ENCODE measurements at regions of chr17 and their contacts with region 1.

Region 1: GRCh38 chr17:80892019-80892855 is 99.4 kb upstream of the CHMP6 start:
- DNase-seq: peak; percentile 95
- ATAC-seq: peak; percentile 88
- H3K4me3 Mint-ChIP-seq: peak overlapping the region; percentile 74
- H3K27ac Mint-ChIP-seq: peak overlapping the region; percentile 93
- H3K4me1 Mint-ChIP-seq: peaks cover 78% of the 10 kb centered on the region
- H3K27me3 Mint-ChIP-seq: no peaks in the 10 kb centered on the region

Region 2: GRCh38 chr17:80855948-80856862 is 36.0 kb before region 1 on chr17:
- CTCF ChIA-PET with region 1: interaction called, 6 read pairs
- POLR2A ChIA-PET with region 1: interaction called, 12 read pairs
- DNase-seq: peak; percentile 93
- ATAC-seq: peak; percentile 95
- H3K4me3 Mint-ChIP-seq: peak overlapping the region; percentile 54
- H3K27ac Mint-ChIP-seq: peak overlapping the region; percentile 94
- H3K4me1 Mint-ChIP-seq: peaks cover 97% of the 10 kb centered on the region
- H3K27me3 Mint-ChIP-seq: no peaks in the 10 kb centered on the region

Region 3: DNA sequence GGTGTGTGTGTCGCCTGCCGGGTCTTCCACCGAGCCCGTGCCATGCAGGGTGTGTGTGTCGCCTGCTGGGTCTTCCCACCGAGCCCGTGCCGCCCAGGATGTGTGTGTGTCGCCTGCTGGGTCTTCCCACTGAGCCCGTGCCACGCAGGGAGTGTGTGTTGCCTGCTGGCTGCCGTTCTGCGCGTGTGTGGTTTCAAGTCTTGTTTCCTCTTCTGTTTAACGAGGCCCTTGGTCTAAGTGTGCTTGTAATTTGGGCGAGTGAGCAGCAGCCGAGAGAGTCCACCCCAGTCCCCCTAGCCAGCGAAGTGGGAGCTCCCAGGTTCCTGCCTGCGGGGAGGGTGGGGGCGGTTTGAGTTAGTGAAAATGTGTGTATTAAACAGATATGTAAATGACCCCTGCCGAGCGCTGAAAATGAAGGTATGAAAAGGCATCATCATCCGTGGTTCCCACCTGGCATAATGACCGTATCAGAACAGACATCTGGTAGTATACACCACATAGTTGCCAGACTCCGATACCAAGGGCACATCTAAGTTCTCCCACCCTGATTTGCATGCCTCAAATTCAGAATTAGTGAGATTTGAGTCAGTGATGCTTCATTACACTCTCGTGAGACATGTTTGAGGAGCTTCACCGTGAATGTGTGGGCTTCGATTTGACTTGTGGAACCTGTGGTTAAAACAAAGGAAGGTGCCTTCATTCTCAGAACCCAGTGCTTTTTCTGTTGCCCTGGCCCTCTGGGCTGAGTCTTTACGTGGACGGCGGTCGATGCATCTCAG is 15.1 kb before region 1 on chr17:
- CTCF ChIA-PET with region 1: interaction called, 6 read pairs
- POLR2A ChIA-PET with region 1: interaction called, 15 read pairs
- DNase-seq: peak; percentile 80
- ATAC-seq: peak; percentile 89
- H3K4me3 Mint-ChIP-seq: peak overlapping the region; percentile 64
- H3K27ac Mint-ChIP-seq: peak overlapping the region; percentile 98
- H3K4me1 Mint-ChIP-seq: peaks cover 72% of the 10 kb centered on the region
- H3K27me3 Mint-ChIP-seq: no peaks in the 10 kb centered on the region

Region 4: DNA sequence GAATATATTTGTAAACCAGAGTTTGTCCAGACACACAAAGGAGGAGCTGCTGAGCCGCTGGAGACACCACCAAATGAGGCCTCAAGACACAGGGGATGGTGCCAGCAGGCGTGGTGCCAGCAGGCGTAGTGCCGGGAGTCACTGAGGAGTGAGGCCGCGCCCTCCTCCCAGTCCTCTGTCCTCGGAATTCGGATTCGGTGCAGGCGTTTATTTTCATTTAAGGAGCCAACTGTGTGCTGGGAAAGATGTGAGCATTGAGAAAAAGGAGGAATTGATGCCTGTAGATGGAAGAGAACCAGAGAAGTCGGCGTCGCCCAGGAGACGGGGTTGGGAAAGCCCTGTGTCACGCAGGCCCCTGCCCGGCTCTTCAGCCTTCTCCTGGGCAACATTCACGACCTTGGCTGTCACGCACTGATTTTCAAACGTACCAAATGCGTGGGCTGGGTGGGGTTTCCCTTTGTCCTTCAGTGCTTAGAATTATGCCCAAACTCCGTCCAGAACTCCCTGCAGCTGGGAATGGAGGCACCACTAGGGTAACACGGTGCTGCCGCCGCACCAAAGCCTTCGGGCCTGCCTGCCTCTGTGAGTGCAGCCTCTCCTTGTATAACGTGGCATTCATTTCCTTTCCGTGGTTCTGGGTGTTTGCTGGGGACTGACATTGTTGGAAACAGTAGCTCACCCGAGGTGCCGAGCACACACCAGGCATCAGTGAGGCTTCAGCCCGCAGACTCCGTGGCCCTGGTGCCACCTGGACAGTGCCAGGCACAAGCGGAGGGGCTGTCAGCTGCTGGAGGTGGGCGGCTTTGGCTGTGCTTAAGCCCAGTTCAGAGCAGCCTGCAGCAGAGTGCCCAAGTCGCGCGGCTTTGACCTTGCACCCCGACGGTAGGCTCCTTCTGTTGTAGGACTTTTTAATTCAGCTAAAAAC is 50.4 kb after region 1 on chr17:
- CTCF ChIA-PET with region 1: no interaction called
- POLR2A ChIA-PET with region 1: no interaction called
- DNase-seq: no peak
- ATAC-seq: no peak
- H3K4me3 Mint-ChIP-seq: no peak overlapping the region
- H3K27ac Mint-ChIP-seq: peak overlapping the region; percentile 30
- H3K4me1 Mint-ChIP-seq: peaks cover 34% of the 10 kb centered on the region
- H3K27me3 Mint-ChIP-seq: no peaks in the 10 kb centered on the region

Measured in activated CD8-positive, alpha-beta T cell treated with anti-CD3 and anti-CD28 coated beads, Interleukin-2, amount 10 ng/mL, durations not matched to agents 7 days and 5 days (primary cell).